Common myeloid progenitor, CD34-positive (primary cell): ENCODE measurements at regions of chr11 and their contacts with region 1.

Region 1: DNA sequence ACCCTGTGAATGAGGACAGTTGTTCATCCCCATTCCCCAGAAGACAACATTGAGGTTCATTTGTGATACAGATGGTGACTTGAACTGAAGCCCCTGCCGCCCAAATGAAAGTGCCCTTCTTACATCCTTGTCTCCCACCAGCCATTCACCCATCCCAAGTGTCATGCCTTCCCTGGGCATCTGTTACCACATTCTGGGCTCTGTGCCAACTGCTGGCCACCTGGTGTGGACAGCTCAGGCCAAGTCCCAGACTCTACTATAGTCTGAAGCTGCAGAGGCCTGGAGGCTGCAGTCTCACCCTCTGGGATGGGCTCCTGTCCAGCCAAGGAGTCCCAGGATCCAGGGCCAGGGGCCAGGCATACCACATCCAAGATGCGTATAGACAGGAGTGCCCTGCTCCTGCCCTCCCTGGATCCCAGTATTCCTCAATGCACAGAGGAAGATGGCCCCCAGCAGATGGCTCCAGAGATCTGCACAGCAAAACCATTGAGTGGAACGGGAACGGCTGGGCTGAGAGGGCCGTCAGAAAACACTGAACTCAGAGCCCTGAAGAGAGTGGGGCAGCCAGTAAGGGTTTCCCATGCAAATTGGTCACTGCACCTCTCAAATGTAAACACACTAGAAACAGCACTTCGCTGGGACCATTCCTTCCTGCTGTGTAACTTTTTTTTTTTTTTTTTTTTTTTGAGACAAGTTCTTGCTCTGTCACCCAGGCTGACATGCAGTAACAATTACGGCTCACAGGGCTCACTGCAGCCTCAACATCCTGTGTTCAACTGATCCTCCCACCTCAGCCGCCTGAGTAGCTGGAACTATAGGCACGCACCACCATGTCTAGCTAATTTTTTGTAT is 22.8 kb downstream of the ARRB1 start:
- DNase-seq: peak; percentile 93 to 97 (median 95)
- H3K4me3 ChIP-seq: peak overlapping the region in 3 of 7 experiments; percentile 13 to 32 (median 19)
- H3K27ac ChIP-seq: peak overlapping the region; percentile 62 to 86
- H3K4me1 ChIP-seq: peaks cover 8 to 67% (median 58%) of the 10 kb centered on the region in 4 experiments
- H3K27me3 ChIP-seq: no peaks in the 10 kb centered on the region

Region 2: DNA sequence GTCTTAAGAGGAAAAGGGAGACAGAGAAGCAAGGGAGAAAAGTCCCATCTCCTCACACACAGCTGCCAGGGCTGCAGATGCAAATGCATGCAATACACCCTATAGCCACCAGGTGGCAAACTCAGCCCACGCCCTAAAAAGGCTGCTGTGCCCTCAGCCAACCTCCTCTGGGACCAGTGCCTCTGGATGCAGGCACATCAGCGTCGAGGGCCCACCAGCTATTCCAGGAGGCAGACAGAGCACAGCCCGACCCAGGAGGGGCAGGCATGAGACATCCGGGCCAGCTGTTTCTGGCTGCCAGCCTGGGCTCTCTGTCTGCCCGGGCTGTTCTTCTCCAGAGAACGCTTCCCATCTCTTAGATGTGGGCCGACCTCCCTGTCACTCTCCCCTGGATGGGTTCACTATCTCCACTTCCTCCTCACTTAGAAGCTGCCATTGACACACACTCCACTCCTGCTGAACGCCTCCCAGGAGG is 48.4 kb before region 1 on chr11:
- CTCF ChIA-PET with region 1: interaction called, 19 read pairs
- POLR2A ChIA-PET with region 1: no interaction called
- DNase-seq: peak; percentile 70 to 85 (median 80)
- H3K4me3 ChIP-seq: no peak overlapping the region
- H3K27ac ChIP-seq: no peak overlapping the region
- H3K4me1 ChIP-seq: peaks cover 16 to 35% (median 32%) of the 10 kb centered on the region in 4 experiments
- H3K27me3 ChIP-seq: no peaks in the 10 kb centered on the region

Region 3: GRCh38 chr11:75342903-75343870 is 14.5 kb after region 1 on chr11:
- CTCF ChIA-PET with region 1: interaction called, 57 read pairs
- POLR2A ChIA-PET with region 1: interaction called, 8 read pairs
- DNase-seq: peak in 2 of 3 donors; percentile 39 to 45
- H3K4me3 ChIP-seq: peak overlapping the region in 1 of 7 experiments; percentile 17
- H3K27ac ChIP-seq: peak overlapping the region in 1 of 2 experiments; percentile 85
- H3K4me1 ChIP-seq: peaks cover 35 to 100% (median 99%) of the 10 kb centered on the region in 4 experiments
- H3K27me3 ChIP-seq: no peaks in the 10 kb centered on the region

Region 4: DNA sequence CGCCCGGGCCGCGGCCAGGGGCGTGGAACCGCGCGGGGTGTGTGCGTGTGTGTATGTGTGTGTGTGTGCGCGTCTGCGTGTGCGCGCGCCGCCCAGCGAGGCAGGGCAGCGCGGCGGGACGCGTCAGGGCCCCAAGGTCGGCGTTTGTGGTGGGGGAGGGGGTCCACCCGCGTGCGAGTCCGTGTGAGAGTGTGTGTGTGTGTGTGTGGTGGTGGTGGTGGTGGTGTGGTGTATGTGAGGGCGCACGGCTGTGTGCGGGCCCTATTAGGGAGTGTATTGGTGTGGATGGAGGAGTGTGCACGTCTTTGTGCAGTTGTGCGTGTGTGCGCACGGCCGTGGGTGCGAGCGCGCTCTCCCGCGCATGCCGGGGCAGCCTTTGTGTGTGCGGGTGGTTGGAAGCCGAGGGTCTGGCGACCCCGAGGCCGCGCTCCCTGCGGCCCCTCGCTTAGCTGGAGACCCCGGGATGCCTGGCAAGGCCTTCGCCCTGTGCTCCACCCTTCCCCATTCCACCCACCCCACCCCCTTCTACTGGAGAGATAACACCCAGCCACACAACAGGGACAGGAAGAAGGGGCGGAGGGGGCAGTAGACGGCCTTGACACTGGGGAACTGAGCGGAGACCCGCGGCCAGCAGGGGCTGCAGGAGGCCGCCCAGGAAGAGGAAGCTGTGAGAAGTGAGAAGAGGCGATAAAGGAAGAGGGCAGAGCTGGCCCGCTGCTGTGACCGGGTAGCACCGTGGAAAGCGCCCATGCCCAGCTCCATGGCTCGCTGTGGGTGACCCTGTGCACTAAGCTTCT is 23.3 kb after region 1 on chr11:
- CTCF ChIA-PET with region 1: interaction called, 15 read pairs
- POLR2A ChIA-PET with region 1: interaction called, 4 read pairs
- DNase-seq: peak; percentile 83 to 93 (median 88)
- H3K4me3 ChIP-seq: peak overlapping the region; percentile 65 to 93 (median 81)
- H3K27ac ChIP-seq: peak overlapping the region; percentile 40 to 77
- H3K4me1 ChIP-seq: peaks cover 11 to 67% (median 60%) of the 10 kb centered on the region in 4 experiments
- H3K27me3 ChIP-seq: no peaks in the 10 kb centered on the region

Region 5: GRCh38 chr11:75547580-75548058 is 219.0 kb after region 1 on chr11:
- CTCF ChIA-PET with region 1: no interaction called
- POLR2A ChIA-PET with region 1: no interaction called
- DNase-seq: peak in 2 of 3 donors; percentile 32 to 46
- H3K4me3 ChIP-seq: no peak overlapping the region
- H3K27ac ChIP-seq: no peak overlapping the region
- H3K4me1 ChIP-seq: peaks cover 0 to 7% (median 2%) of the 10 kb centered on the region in 4 experiments
- H3K27me3 ChIP-seq: peaks cover 0 to 3% (median 0%) of the 10 kb centered on the region in 5 experiments